Naive thymus-derived CD8-positive, alpha-beta T cell (primary cell): ENCODE measurements at regions of chr5 and their contacts with region 1.

Region 1: DNA sequence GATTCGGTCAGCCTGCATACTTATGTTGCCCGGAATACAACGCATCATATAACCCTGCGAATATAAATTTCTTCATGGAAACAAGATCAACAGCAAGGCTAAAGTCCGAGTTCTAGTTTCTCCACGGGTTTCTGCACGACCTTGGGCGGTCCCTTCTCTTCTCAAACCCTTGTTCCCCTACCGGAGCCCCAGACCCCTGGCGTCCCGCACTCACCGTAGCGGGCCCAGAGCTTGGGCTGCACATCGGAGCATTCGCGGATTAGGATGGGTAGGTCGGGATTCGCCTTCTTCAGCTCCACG is 438 bp downstream of the NDUFA2 start:
- DNase-seq: peak in 1 of 10 donors; percentile 24
- ATAC-seq: no peak
- H3K4me3 Mint-ChIP-seq: peak overlapping the region; percentile 96 to 100 (median 99)
- H3K27ac Mint-ChIP-seq: peak overlapping the region; percentile 98 to 100 (median 100)
- H3K4me1 Mint-ChIP-seq: peaks cover 21 to 68% (median 64%) of the 10 kb centered on the region in 4 donors
- H3K27me3 Mint-ChIP-seq: no peaks in the 10 kb centered on the region

Region 2: GRCh38 chr5:140401362-140402257 is 245.4 kb before region 1 on chr5 and contains the start of gene ANKHD1:
- POLR2A ChIA-PET with region 1: interaction called, 34 read pairs
- DNase-seq: peak; percentile 90 to 99 (median 98)
- ATAC-seq: peak; percentile 79 to 84
- H3K4me3 Mint-ChIP-seq: no peak within 1 kb of the TSS
- H3K27ac Mint-ChIP-seq: peak within 1 kb of the TSS in 2 of 10 donors; percentile 89 to 94
- H3K4me1 Mint-ChIP-seq: peaks cover 20 to 46% (median 38%) of the 10 kb centered on the region in 4 donors
- H3K27me3 Mint-ChIP-seq: no peaks in the 10 kb centered on the region
- polyA plus RNA-seq, gene ANKHD1: 54.9 to 82.8 (median 63.8) TPM

Region 3: GRCh38 chr5:140557136-140557805 is 89.7 kb before region 1 on chr5 and contains the start of gene SRA1:
- POLR2A ChIA-PET with region 1: interaction called, 15 read pairs
- DNase-seq: peak; percentile 65 to 89 (median 76)
- ATAC-seq: peak; percentile 86 to 94
- H3K4me3 Mint-ChIP-seq: peak within 1 kb of the TSS; percentile 83 to 97 (median 92)
- H3K27ac Mint-ChIP-seq: peak within 1 kb of the TSS; percentile 82 to 97 (median 96)
- H3K4me1 Mint-ChIP-seq: peaks cover 41 to 54% (median 49%) of the 10 kb centered on the region in 4 donors
- H3K27me3 Mint-ChIP-seq: no peaks in the 10 kb centered on the region
- polyA plus RNA-seq, gene SRA1: 26.7 to 37.5 (median 37.1) TPM

Region 4: GRCh38 chr5:140632150-140633020 is 14.6 kb before region 1 on chr5:
- POLR2A ChIA-PET with region 1: interaction called, 54 read pairs
- DNase-seq: peak; percentile 22 to 70 (median 44)
- ATAC-seq: peak; percentile 86 to 87
- H3K4me3 Mint-ChIP-seq: peak overlapping the region; percentile 87 to 94 (median 92)
- H3K27ac Mint-ChIP-seq: peak overlapping the region; percentile 70 to 96 (median 85)
- H3K4me1 Mint-ChIP-seq: peaks cover 13 to 35% (median 28%) of the 10 kb centered on the region in 4 donors
- H3K27me3 Mint-ChIP-seq: peaks cover 0 to 13% (median 2%) of the 10 kb centered on the region in 5 donors

Region 5: DNA sequence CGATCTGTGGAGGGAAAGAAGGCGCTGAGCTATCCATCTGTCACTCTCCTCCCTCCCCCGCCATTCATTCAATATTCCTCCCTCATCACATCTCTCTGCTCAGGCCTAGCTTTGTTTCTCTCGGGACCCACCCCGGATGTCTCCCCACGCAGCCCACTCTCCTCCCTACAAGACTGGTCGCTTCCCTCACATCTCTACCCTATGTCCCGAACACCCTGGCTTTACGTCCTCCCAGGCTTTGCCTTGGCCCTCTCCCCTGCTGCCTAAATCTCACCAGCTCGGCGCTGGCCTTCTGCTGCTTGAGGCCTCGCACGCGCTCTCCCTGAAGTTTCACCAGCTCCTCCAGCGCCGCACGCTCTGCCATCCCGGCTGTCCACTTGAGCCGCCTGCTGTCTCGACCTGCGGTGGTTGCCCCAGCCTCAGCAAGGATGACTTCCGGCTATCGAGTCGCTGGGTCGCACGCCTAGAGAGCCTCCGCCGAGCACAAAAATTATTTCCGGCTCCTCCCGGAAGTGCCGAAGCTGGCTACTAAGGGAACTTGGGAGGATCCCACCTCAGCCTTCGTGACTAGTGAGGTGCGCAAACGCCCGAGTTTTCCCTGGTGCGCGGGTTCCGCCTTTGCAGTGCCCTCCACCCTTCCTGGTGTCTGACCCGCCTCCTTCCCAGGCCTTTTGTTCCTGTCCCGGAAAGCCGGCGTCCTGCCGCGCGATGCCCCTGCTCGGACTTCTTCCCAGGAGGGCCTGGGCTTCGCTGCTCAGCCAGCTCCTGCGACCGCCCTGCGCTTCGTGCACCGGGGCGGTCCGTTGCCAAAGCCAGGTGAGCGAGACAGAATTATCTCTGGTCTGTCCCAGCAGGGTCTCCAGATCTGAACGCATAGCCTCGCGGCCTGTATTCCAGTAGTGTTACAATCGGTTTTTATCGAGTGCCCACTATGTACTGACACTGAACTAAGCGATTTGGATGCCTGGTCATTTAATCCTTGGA is 44.2 kb after region 1 on chr5 and contains the starts of genes HARS1 and HARS2:
- POLR2A ChIA-PET with region 1: interaction called, 44 read pairs
- DNase-seq: peak; percentile 60 to 87 (median 77)
- ATAC-seq: peak; percentile 92 to 94
- H3K4me3 Mint-ChIP-seq: peak within 1 kb of the TSS; percentile 99 to 100 (median 99)
- H3K27ac Mint-ChIP-seq: peak within 1 kb of the TSS; percentile 90 to 99 (median 98)
- H3K4me1 Mint-ChIP-seq: peaks cover 14 to 49% (median 46%) of the 10 kb centered on the region in 4 donors
- H3K27me3 Mint-ChIP-seq: no peaks in the 10 kb centered on the region
- polyA plus RNA-seq, gene HARS1: 63.2 to 77.5 (median 65.3) TPM
- polyA plus RNA-seq, gene HARS2: 15.4 to 24.6 (median 20.1) TPM

Region 6: GRCh38 chr5:140710899-140711552 is 64.0 kb after region 1 on chr5:
- POLR2A ChIA-PET with region 1: interaction called, 26 read pairs
- DNase-seq: peak; percentile 36 to 95 (median 86)
- ATAC-seq: peak; percentile 86 to 87
- H3K4me3 Mint-ChIP-seq: peak overlapping the region; percentile 93 to 100 (median 99)
- H3K27ac Mint-ChIP-seq: peak overlapping the region; percentile 97 to 100 (median 98)
- H3K4me1 Mint-ChIP-seq: peaks cover 11 to 24% (median 18%) of the 10 kb centered on the region in 4 donors
- H3K27me3 Mint-ChIP-seq: no peaks in the 10 kb centered on the region